Esophagus muscularis mucosa (tissue), 4 donors: ENCODE measurements at regions of chr2 and their contacts with region 1.

Region 1: GRCh38 chr2:197378494-197379307 is 56.1 kb downstream of the SF3B1 start:
- DNase-seq: no peak
- H3K4me3 ChIP-seq: peak overlapping the region in 1 of 4 donors; percentile 10
- H3K27ac ChIP-seq: peak overlapping the region in 1 of 4 donors; percentile 27
- H3K4me1 ChIP-seq: peaks cover 0 to 17% (median 7%) of the 10 kb centered on the region in 4 donors
- H3K27me3 ChIP-seq: no peaks in the 10 kb centered on the region
- CTCF ChIP-seq: peak; percentile 67 to 81 (median 70)
- EP300 ChIP-seq: no peak
- POLR2A ChIP-seq: no peak

Region 2: DNA sequence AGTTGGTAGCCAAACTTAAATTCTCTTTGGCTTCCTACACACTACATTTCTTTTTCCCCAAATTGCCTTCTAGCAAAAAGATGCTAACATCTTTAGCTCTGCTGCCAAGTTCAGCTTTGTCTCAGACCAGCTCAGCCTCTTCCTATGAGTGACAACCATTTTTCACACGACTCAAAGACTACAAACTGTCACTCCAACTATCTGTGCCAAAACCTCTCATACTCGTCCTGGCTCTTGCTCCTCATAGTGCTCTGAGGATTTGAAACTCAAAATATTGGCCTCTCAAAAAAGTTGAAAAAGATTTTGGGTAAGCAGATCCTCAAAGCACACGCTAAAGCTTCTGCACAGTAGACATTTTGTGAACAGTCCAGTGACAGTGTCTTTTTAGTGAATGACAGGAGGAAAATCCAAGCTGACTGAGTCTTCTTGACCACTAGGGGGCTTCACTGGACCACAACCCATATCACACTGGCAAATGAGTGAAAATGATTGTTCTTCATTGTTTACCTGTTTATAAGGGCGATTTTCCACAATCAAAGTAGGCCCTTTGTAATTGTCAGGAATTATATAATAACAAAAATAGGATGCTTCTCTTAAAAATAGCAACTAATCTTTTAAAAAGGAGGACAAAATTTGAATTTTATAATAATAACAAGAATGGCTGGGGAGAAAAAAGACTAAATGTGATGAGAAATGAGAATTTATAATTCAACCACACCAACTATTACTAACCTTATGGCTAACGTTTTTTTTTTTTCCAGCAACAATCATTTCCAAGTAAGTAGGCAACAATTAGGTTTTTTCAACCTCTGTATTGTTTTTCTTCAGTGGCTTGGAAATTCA is 366.7 kb before region 1 on chr2:
- intact Hi-C with region 1: loop called (anchors 5 kb)
- DNase-seq: no peak
- H3K4me3 ChIP-seq: no peak overlapping the region
- H3K27ac ChIP-seq: no peak overlapping the region
- H3K4me1 ChIP-seq: no peaks in the 10 kb centered on the region
- H3K27me3 ChIP-seq: no peaks in the 10 kb centered on the region
- CTCF ChIP-seq: peak; percentile 70 to 77 (median 74)
- EP300 ChIP-seq: no peak
- POLR2A ChIP-seq: no peak

Region 3: GRCh38 chr2:197115325-197115724 is 263.4 kb before region 1 on chr2:
- intact Hi-C with region 1: loop called (anchors 2 kb)
- DNase-seq: no peak
- H3K4me3 ChIP-seq: no peak overlapping the region
- H3K27ac ChIP-seq: no peak overlapping the region
- H3K4me1 ChIP-seq: peaks cover 0 to 15% (median 10%) of the 10 kb centered on the region in 4 donors
- H3K27me3 ChIP-seq: no peaks in the 10 kb centered on the region
- CTCF ChIP-seq: no peak
- EP300 ChIP-seq: no peak
- POLR2A ChIP-seq: no peak

Region 4: DNA sequence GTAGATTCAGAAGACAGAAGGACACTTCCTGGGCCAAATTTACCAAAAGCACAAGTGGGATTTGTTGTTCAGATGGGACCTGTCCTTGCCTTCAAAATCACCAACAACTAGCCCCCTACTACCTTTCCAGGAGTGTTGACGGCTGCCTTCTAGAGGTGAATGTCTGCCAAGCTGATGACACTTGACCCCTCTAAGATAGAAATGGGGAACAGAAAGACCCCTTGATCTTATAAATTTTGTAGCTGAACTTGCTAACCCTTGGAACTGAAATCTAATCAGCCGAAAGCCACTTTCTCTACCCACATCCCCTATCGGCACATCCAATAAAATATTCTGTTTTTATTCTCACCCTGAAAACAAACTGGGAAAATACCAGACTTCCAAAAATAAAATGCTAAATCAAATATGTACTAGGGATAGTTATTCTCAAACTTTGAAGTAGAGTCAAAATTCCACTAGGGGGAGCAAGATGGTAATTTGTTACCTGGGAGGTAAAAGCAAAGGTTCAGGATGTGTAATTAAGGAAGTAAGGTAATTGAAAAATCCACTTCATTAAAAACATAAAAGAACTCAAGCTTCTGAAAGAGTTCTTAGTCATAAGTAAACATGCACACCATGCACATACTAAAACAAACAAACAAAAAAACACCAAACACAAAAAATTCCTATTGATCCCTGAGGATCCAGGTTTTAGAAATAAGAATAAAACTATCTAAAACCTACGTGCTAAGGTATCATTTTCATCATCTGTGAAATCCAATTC is 187.3 kb before region 1 on chr2:
- intact Hi-C with region 1: loop called (anchors 5 kb)
- DNase-seq: no peak
- H3K4me3 ChIP-seq: no peak overlapping the region
- H3K27ac ChIP-seq: no peak overlapping the region
- H3K4me1 ChIP-seq: peaks cover 5 to 58% (median 48%) of the 10 kb centered on the region in 4 donors
- H3K27me3 ChIP-seq: no peaks in the 10 kb centered on the region
- CTCF ChIP-seq: peak; percentile 64 to 70 (median 66)
- EP300 ChIP-seq: no peak
- POLR2A ChIP-seq: no peak

Region 5: DNA sequence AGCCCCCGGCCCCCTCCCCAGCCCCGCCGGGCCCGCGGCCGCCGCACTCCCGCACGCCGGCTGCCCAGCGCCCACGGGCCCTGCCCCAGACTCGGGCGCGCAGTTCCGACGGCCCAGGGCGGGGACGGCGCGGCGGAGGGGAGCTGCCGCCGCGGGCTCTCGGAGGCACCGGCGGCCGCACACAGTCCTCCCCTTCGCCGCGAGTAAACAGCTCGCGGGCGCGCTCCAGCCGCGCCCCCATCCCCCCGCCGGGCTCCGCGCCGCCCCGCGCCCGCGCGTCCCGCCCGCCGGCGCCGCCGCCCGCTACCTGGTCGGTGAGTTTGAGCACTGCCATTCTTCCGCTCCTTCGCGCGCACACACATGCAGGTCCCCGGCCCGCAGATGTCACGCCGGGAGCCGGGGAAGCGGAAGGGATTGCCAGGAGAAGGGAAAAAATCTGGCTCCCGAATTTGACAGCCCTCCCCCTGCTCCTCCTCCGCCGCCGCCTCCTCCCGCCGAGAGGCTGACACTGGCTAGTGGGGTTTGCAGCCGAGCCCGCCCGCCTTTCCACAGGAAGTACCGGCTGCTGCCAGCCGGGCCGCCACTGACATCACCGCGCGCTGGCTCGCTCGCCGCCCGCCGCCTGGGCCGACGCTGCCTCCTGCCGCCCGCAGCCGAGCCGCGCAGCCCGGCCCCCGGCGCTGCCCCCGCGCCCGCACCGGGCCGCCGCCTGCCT is 68.3 kb before region 1 on chr2 and contains the start of gene ANKRD44:
- intact Hi-C with region 1: loop called (anchors 5 kb)
- DNase-seq: peak; percentile 95
- H3K4me3 ChIP-seq: peak within 1 kb of the TSS; percentile 84 to 93 (median 88)
- H3K27ac ChIP-seq: peak within 1 kb of the TSS; percentile 83 to 88 (median 85)
- H3K4me1 ChIP-seq: peaks cover 26 to 52% (median 51%) of the 10 kb centered on the region in 4 donors
- H3K27me3 ChIP-seq: no peaks in the 10 kb centered on the region
- CTCF ChIP-seq: peak; percentile 45 to 64 (median 61)
- EP300 ChIP-seq: no peak
- POLR2A ChIP-seq: no peak
- total RNA-seq, gene ANKRD44: 41.4 to 76.6 (median 48.1) TPM

Region 6: DNA sequence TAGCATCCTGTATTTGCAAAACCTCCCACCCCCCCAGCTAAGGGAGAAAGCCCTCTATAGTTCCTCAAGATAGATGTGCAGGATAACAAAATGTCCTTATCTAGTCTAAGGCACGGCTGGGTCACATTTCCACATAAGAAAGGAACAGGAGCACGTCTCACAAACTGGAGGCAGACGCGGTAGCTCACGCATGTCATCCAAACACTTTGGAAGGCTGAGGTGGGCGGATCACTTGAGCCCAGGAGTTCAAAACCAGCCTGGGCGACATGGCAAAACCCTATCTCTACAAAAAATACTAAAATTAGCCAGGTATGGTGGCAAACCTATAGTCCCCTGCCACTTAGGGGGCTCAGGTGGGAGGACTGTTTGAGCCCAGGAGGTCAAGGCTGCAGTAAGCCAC is 46.8 kb after region 1 on chr2:
- intact Hi-C with region 1: no loop called
- DNase-seq: peak; percentile 47
- H3K4me3 ChIP-seq: peak overlapping the region in 1 of 4 donors; percentile 2
- H3K27ac ChIP-seq: no peak overlapping the region
- H3K4me1 ChIP-seq: peaks cover 54 to 95% (median 87%) of the 10 kb centered on the region in 4 donors
- H3K27me3 ChIP-seq: no peaks in the 10 kb centered on the region
- CTCF ChIP-seq: no peak
- EP300 ChIP-seq: no peak
- POLR2A ChIP-seq: no peak